Heart right ventricle (tissue), 16 donors: ENCODE measurements at regions of chr15 and their contacts with region 1.

Region 1: DNA sequence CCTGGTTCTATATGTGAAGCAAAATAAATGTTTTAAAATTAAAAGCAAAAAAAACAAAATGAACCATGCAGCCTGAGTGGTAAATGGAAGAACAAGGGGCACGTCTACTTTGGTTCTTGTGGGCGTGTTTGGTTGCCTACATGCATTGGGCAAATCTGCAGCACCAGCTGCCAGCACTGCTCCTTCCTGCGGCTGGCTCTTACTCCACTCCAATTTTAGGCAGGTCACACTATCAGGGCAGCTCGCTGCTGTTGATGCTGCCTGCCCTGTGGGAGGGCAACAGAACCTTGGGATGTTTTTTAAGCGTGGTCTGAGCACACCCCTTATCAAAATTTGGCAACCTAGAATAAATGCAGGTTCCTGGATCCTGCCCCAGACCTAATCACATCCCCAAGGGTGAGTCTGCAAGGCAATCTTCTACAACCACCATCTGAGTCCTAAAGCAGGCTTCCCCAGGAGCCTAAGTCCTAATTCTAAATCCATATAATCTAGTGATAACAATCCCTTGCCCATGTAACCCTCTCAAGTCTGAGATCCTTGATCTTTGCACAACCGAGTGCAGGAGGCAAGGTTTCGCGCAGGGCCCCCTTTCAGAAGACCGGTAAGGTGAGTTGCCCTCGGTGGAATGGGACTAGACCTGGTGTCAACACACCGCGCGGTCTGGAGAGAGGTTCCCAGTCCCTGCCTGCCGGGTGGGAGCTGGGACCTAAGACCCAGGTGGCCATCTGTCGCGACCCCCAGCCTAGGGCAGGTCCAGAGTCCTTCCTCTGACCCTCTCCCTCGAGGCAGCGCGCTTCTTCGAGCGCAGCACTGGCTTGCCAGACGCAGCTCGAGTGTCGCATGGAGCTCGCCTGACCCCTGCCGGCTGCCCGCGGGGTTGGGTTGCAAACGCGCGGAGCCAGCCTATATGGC is 15.9 kb downstream of the IVD start:
- DNase-seq: peak; percentile 76 to 84
- ATAC-seq: peak; percentile 84 to 93 (median 90)
- H3K4me3 ChIP-seq: no peak overlapping the region
- H3K27ac ChIP-seq: peak overlapping the region in 9 of 10 donors; percentile 52 to 82 (median 64)
- H3K4me1 ChIP-seq: peaks cover 6 to 26% (median 23%) of the 10 kb centered on the region in 9 donors
- H3K27me3 ChIP-seq: no peaks in the 10 kb centered on the region
- CTCF ChIP-seq: peak; percentile 88 to 96 (median 95)

Region 2: DNA sequence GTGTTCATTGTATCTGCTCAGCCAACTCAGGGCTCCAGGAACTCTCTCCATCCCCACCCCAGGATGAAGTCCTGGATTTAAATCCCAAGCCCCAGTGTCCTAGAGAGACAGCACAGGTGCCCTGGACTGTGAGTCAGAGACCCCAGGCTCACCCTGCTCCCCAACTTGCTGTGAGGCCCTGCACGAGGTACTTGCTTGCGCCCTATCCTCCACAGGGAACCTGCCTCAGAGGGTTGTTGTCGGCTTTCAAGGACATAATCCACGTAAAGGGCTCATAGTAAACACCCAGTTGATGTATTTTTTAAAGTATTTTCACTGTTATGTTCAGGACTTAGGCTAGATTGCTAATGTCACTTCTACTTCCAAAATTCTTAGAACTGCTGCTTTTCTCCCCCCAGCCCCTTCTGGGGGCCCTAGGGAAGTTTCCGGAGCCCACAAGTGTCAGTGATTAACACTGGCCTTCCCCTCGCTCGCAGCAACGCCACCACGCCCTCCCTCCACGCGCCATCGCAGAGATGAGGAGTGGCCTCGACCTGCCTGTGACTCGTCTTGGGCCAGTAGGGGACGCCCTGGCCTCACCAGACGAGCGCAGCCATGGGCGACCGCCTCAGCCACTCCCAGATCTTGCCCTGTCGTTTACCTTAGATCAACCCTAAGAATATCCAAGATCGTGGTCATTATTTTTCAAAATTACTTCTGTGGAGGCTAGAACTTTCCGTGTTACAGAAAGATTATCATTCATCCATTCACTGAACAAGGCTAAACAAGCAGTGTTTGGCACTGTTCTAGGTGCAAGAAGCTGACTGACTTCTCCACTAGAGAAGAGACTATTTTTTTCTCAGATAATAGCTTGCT is 376.6 kb before region 1 on chr15:
- intact Hi-C with region 1: loop called in 2 of 10 experiments (anchors 10 kb)
- DNase-seq: peak; percentile 87 to 89
- ATAC-seq: peak; percentile 91 to 96 (median 94)
- H3K4me3 ChIP-seq: peak overlapping the region in 5 of 10 donors; percentile 2 to 22 (median 19)
- H3K27ac ChIP-seq: peak overlapping the region in 8 of 10 donors; percentile 36 to 74 (median 46)
- H3K4me1 ChIP-seq: peaks cover 3 to 67% (median 59%) of the 10 kb centered on the region in 9 donors
- H3K27me3 ChIP-seq: no peaks in the 10 kb centered on the region
- CTCF ChIP-seq: peak; percentile 79 to 99 (median 95)

Region 3: GRCh38 chr15:40274350-40275274 is 146.9 kb before region 1 on chr15:
- intact Hi-C with region 1: loop called in 9 of 10 experiments (anchors 1 to 5 kb)
- DNase-seq: peak; percentile 78 to 81
- ATAC-seq: peak; percentile 18 to 69 (median 50)
- H3K4me3 ChIP-seq: no peak overlapping the region
- H3K27ac ChIP-seq: no peak overlapping the region
- H3K4me1 ChIP-seq: peaks cover 0 to 32% (median 10%) of the 10 kb centered on the region in 9 donors
- H3K27me3 ChIP-seq: peaks cover 0 to 25% (median 20%) of the 10 kb centered on the region in 7 donors
- CTCF ChIP-seq: peak in 8 of 9 donors; percentile 99 to 100 (median 100)

Region 4: DNA sequence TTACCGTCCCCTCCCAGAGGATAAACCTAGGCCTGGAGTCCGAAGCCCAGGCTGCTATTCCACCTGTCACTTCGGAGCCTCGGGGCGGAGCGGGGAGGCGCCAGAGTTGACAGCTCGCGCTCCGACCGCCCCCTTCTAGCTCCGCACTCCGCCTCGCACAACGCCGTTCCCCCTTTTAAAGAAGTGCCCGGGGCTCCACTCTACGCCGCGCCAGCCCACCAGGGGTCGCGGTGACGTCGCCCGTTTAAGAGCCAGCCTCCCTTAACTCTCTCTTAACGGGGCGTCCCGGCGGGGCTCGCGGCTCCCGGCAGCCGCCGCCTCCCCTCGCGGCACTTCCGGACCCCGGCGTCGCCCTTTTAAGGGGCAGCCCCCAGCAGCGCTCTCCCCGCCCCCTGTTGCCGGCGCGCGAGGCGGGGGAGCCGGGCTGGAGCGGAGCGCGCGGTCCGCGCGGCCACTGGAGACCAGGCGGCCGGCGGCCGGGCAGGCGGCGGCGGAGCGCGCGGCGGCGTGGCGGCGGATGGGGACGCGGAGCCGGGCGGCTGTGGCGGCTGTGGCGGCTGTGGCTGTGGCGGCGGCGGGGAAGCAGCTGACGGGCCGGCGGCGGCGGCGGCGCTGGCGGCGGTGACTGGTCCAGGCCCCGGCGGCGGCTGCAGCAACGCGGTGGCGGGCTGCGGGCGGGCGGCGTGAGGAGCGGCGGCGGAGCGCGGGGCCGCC is 98.1 kb before region 1 on chr15 and contains the start of gene INAFM2:
- intact Hi-C with region 1: loop called in 8 of 10 experiments (anchors 1 to 10 kb)
- DNase-seq: peak; percentile 90 to 94
- ATAC-seq: peak; percentile 90 to 93 (median 92)
- H3K4me3 ChIP-seq: peak within 1 kb of the TSS; percentile 63 to 93 (median 82)
- H3K27ac ChIP-seq: peak within 1 kb of the TSS; percentile 78 to 94 (median 90)
- H3K4me1 ChIP-seq: peaks cover 7 to 54% (median 42%) of the 10 kb centered on the region in 9 donors
- H3K27me3 ChIP-seq: no peaks in the 10 kb centered on the region
- CTCF ChIP-seq: peak; percentile 68 to 86 (median 77)
- total RNA-seq, gene INAFM2: 32.5 to 63.9 (median 40.9) TPM

Region 5: DNA sequence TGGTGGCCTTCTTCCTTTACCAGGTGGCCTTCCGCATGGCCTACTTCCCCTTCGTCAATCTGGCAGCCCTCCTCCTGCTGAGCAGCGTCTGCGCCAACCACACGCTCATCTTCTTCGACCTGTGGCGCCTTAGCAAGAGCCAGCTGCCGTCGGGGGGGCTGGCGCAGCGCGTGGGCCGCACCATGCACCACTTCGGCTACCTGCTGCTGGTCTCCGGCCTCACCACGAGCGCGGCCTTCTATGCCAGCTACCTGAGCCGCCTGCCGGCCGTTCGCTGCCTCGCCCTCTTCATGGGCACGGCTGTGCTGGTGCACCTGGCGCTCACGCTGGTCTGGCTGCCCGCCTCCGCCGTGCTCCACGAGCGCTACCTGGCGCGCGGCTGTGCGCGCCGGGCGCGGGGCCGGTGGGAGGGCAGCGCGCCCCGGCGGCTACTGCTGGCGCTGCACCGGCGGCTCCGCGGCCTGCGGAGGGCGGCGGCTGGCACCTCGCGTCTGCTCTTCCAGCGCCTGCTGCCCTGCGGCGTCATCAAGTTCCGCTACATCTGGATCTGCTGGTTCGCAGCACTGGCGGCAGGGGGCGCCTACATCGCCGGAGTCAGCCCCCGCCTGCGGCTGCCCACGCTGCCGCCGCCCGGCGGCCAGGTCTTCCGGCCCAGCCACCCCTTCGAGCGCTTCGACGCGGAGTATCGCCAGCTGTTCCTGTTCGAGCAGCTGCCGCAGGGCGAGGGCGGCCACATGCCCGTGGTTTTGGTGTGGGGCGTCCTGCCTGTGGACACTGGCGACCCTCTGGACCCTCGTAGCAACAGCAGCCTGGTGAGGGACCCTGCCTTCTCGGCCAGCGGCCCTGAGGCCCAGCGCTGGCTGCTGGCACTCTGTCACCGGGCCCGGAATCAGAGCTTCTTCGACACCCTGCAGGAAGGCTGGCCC is 53.6 kb before region 1 on chr15:
- intact Hi-C with region 1: loop called in 6 of 10 experiments (anchors 5 to 10 kb)
- DNase-seq: peak; percentile 79 to 84
- ATAC-seq: peak; percentile 60 to 79 (median 68)
- H3K4me3 ChIP-seq: peak overlapping the region in 9 of 10 donors; percentile 12 to 57 (median 38)
- H3K27ac ChIP-seq: peak overlapping the region; percentile 60 to 91 (median 85)
- H3K4me1 ChIP-seq: peaks cover 3 to 38% (median 29%) of the 10 kb centered on the region in 9 donors
- H3K27me3 ChIP-seq: no peaks in the 10 kb centered on the region
- CTCF ChIP-seq: peak; percentile 75 to 93 (median 88)

Region 6: DNA sequence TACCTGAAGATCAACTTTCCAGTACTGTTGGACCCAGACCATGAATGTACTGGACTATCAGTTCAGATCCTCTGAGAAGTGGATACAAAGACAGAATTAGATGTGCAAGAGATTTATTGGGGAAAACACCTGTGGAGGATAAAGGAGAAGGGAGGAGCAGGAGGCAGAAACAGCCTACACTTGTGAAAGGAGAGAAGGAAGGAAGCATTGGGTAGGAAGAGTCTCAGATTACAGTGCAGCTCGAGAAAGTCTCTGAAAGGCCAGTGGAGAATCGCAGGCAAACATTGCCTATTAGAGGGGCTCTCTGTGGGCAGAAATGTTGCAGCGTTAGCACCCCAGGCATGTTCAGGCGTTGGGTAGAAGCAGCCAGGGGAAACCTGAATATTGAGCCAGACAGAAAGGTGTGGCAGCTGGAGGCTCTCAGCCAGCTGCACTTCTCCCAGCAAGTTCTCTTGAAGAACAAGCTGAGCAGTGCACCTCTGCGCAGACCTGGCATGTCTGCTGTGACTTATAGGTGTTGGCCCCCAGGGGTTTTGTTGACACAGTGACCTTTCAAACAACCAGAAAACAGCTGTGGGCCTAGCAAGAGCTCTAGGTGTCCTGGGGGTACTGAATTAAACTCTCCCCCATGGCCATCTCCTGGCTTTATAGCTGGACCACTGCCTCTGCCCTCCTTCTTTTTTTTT is 56.3 kb after region 1 on chr15:
- intact Hi-C with region 1: no loop called
- DNase-seq: no peak
- ATAC-seq: no peak
- H3K4me3 ChIP-seq: no peak overlapping the region
- H3K27ac ChIP-seq: no peak overlapping the region
- H3K4me1 ChIP-seq: no peaks in the 10 kb centered on the region
- H3K27me3 ChIP-seq: no peaks in the 10 kb centered on the region
- CTCF ChIP-seq: no peak